A673 (cell line): ENCODE measurements at regions of chr7 and their contacts with region 1.

Region 1: GRCh38 chr7:151782598-151783448 is 94.1 kb downstream of the PRKAG2 start:
- DNase-seq: peak; percentile 80
- H3K4me3 ChIP-seq: peak overlapping the region; percentile 36
- H3K27ac ChIP-seq: peak overlapping the region; percentile 43
- H3K4me1 ChIP-seq: peaks cover 8% of the 10 kb centered on the region
- H3K27me3 ChIP-seq: no peaks in the 10 kb centered on the region
- CTCF ChIP-seq: peak; percentile 95

Region 2: GRCh38 chr7:151876899-151877777 is 94.3 kb after region 1 on chr7 and contains the start of gene PRKAG2:
- CTCF ChIA-PET with region 1: no interaction called
- POLR2A ChIA-PET with region 1: no interaction called
- intact Hi-C with region 1: loop called (anchors 5 kb)
- DNase-seq: peak; percentile 83
- H3K4me3 ChIP-seq: peak within 1 kb of the TSS; percentile 83
- H3K27ac ChIP-seq: peak within 1 kb of the TSS; percentile 76
- H3K4me1 ChIP-seq: peaks cover 15% of the 10 kb centered on the region
- H3K27me3 ChIP-seq: no peaks in the 10 kb centered on the region
- CTCF ChIP-seq: no peak; the same call in 1 of the 2 replicates
- total RNA-seq, gene PRKAG2: 10.3 and 11.6 TPM in 2 replicates

Region 3: GRCh38 chr7:151932358-151932876 is 149.6 kb after region 1 on chr7:
- CTCF ChIA-PET with region 1: interaction called, 3 read pairs
- POLR2A ChIA-PET with region 1: interaction called, 3 read pairs
- intact Hi-C with region 1: loop called (anchors 2 kb)
- DNase-seq: peak; percentile 85
- H3K4me3 ChIP-seq: peak overlapping the region; percentile 41
- H3K27ac ChIP-seq: peak overlapping the region; percentile 62
- H3K4me1 ChIP-seq: peaks cover 3% of the 10 kb centered on the region
- H3K27me3 ChIP-seq: no peaks in the 10 kb centered on the region
- CTCF ChIP-seq: no peak

Region 4: GRCh38 chr7:151999424-152000090 is 216.7 kb after region 1 on chr7:
- CTCF ChIA-PET with region 1: no interaction called
- POLR2A ChIA-PET with region 1: no interaction called
- intact Hi-C with region 1: no loop called
- DNase-seq: no peak
- H3K4me3 ChIP-seq: no peak overlapping the region
- H3K27ac ChIP-seq: no peak overlapping the region
- H3K4me1 ChIP-seq: no peaks in the 10 kb centered on the region
- H3K27me3 ChIP-seq: no peaks in the 10 kb centered on the region
- CTCF ChIP-seq: no peak

Region 5: GRCh38 chr7:152145853-152146466 is 363.1 kb after region 1 on chr7:
- CTCF ChIA-PET with region 1: no interaction called
- POLR2A ChIA-PET with region 1: no interaction called
- intact Hi-C with region 1: loop called (anchors 2 kb)
- DNase-seq: peak; percentile 60
- H3K4me3 ChIP-seq: no peak overlapping the region
- H3K27ac ChIP-seq: no peak overlapping the region
- H3K4me1 ChIP-seq: peaks cover 3% of the 10 kb centered on the region
- H3K27me3 ChIP-seq: no peaks in the 10 kb centered on the region
- CTCF ChIP-seq: peak; percentile 79